Transverse colon (tissue), 4 donors: ENCODE measurements at regions of chr2 and their contacts with region 1.

Region 1: GRCh38 chr2:118221666-118222594 is 133.7 kb downstream of the INSIG2 start:
- DNase-seq: no peak
- H3K4me3 ChIP-seq: no peak overlapping the region
- H3K27ac ChIP-seq: no peak overlapping the region
- H3K4me1 ChIP-seq: peaks cover 0 to 17% (median 10%) of the 10 kb centered on the region in 4 donors
- H3K27me3 ChIP-seq: peaks cover 100% of the 10 kb centered on the region
- CTCF ChIP-seq: peak; percentile 58 to 71 (median 62)
- EP300 ChIP-seq: no peak
- POLR2A ChIP-seq: no peak

Region 2: DNA sequence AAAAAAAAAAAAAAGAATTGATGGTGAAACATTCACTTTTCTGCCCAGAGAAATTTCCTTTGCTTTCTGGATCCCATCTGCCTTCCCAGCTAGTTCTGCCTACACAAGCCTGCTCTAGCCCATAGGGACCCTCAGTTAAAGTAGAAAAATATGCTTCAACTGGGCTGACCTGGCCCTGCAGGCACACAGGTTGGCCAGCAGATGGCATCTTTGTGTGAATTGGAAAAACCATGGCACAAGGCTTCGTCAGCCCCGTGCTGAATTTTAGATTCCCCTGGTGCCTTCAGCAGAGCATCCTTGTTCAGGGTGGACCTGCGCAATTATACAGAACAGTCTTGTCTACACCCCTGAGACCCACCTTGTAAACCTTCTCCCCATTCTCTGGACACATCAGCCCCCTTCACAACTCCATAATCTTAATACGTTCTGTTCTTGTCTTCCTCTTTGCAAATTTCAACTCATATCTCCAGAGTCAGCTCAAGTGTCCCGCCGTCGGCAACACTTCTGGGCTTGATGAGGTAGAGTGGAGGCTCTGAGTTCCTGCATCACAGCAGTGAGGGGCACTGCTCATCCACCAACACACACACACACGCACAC is 19.1 kb before region 1 on chr2:
- in situ Hi-C with region 1: no loop called
- intact Hi-C with region 1: no loop called
- DNase-seq: peak; percentile 34
- H3K4me3 ChIP-seq: no peak overlapping the region
- H3K27ac ChIP-seq: no peak overlapping the region
- H3K4me1 ChIP-seq: no peaks in the 10 kb centered on the region
- H3K27me3 ChIP-seq: peaks cover 19% of the 10 kb centered on the region
- CTCF ChIP-seq: peak; percentile 58 to 79 (median 73)
- EP300 ChIP-seq: no peak
- POLR2A ChIP-seq: no peak

Region 3: DNA sequence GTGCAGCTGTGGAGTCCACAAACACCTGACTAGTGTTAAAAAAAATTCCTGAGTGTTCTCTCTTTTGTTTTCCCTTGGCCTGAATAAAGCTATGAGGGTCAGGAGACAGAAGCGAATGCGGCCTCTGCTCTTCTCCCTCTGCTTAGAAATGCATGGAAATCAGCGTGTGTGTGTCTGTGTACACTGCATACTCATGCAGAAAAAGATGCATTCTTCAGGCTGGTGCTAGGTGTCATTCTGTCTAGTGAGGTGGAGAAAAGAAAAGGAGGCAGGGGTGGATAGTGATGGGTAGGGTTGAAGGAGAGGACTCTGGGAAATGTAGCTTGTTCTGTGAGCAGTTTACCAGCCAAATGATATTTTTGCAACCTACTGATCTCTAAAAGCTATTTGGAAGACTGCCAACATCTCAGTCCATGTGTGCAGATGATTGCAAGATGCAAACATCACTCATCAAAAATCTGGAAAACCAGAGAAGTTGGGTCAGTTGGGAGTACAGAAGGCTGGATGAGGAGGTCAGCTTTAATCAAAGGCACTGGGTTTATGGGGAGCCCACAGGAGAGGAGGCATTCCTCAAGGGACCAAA is 44.0 kb after region 1 on chr2:
- in situ Hi-C with region 1: no loop called
- intact Hi-C with region 1: no loop called
- DNase-seq: no peak
- H3K4me3 ChIP-seq: no peak overlapping the region
- H3K27ac ChIP-seq: no peak overlapping the region
- H3K4me1 ChIP-seq: no peaks in the 10 kb centered on the region
- H3K27me3 ChIP-seq: no peaks in the 10 kb centered on the region
- CTCF ChIP-seq: no peak
- EP300 ChIP-seq: no peak
- POLR2A ChIP-seq: no peak

Region 4: GRCh38 chr2:118417406-118418120 is 195.6 kb after region 1 on chr2:
- in situ Hi-C with region 1: no loop called
- intact Hi-C with region 1: no loop called
- DNase-seq: no peak
- H3K4me3 ChIP-seq: no peak overlapping the region
- H3K27ac ChIP-seq: no peak overlapping the region
- H3K4me1 ChIP-seq: no peaks in the 10 kb centered on the region
- H3K27me3 ChIP-seq: no peaks in the 10 kb centered on the region
- CTCF ChIP-seq: no peak
- EP300 ChIP-seq: no peak
- POLR2A ChIP-seq: no peak

Region 5: DNA sequence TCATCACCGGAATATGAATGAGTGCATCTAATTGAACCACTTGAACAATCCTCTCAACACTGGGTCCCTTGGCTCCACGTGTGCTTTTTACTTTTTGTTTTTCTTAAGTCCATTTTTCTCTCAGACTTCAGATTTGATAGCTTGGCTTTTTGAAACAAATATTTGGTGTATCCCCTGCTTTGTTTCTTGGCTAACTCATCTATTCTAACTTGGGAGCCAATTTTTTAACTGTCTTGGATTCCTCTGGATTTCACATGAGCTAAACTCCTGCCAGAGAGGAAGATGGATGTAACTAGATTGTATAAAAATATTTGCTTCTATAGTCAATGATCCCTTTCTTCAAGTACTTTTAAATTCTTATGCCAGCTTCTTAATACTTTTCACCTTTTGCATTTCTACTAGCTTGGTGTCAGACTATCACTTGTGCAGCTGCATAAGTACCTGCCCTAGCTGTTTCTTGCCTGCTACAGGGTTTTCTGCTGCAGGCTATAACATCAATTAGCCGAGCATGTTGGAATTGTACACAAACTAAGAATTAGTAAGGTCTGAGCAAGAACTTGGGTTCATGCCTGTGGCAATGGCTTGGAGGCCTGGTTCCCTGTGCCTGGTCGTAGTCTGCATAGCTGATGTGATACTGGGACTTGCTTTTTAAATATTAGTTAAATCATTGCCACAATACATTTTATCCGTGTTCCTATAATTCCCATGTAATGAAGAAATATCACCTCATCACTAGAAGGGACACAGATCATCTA is 344.0 kb after region 1 on chr2:
- in situ Hi-C with region 1: no loop called
- intact Hi-C with region 1: no loop called
- DNase-seq: no peak
- H3K4me3 ChIP-seq: no peak overlapping the region
- H3K27ac ChIP-seq: no peak overlapping the region
- H3K4me1 ChIP-seq: no peaks in the 10 kb centered on the region
- H3K27me3 ChIP-seq: no peaks in the 10 kb centered on the region
- CTCF ChIP-seq: no peak
- EP300 ChIP-seq: no peak
- POLR2A ChIP-seq: no peak

Region 6: DNA sequence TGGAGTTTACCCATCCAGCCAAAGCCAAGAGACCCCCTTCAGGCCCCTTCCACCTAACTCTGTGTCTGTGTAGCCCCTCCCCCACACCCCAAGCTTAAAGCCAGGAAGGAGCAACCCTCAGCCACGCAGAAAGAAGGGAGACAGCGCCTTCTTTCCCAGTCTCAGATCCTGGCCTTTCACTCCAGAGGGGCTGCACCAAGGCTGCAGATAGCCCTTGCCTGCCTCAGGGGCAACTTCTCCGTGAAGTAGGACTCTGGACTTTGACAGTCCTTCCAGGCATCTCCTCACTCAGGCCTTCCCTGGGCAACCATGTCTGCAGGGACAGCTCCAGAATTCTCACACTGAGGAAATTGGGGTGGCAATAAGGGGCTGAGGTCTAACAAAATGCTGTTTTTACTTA is 652.4 kb after region 1 on chr2:
- in situ Hi-C with region 1: loop called in 2 of 4 experiments (anchors 5 to 25 kb)
- intact Hi-C with region 1: no loop called
- DNase-seq: no peak
- H3K4me3 ChIP-seq: no peak overlapping the region
- H3K27ac ChIP-seq: no peak overlapping the region
- H3K4me1 ChIP-seq: no peaks in the 10 kb centered on the region
- H3K27me3 ChIP-seq: peaks cover 51% of the 10 kb centered on the region
- CTCF ChIP-seq: no peak
- EP300 ChIP-seq: no peak
- POLR2A ChIP-seq: no peak